Activated naive CD4-positive, alpha-beta T cell treated with anti-CD3 and anti-CD28 coated beads for 36 hours (primary cell): ENCODE measurements at regions of chr14 and their contacts with region 1.

Region 1: DNA sequence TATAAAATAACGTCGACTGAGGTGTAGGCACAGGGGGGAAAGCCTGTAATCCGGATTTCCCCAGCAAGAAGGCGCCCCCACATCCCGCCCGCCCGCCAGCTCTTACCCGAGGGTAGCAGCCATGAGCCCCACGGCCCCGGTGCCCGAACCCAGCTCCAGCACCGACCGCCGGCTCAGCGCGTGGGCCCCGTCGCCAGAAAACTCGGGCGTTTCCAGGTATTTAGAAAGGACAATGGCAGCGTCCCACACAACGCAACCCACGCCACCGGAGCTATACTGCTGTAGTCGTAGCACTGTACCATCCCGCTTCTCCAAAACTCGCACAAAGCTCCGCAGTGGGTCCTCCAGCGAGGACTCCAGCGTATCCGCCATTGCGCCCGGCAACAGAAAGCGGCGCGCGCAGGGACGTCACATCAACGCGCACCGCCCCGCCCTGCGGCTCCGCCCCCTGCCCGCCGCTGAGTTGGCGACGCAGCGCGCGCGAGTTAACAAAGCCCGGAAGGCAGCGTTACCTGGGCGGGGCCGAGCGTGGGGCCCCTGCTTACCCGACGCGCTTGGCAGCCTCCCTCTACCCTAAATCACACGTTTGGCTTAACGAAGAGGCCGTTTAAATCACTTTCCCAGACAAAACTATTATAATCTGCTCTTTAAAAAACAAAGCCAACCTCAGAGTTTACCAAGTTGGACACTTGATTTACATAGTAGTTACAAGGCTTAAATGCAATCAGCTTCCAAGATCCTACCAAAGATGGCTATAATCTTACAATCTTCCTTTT is at the start of gene VCPKMT:
- DNase-seq: peak; percentile 96
- H3K4me3 Mint-ChIP-seq: peak within 1 kb of the TSS; percentile 98
- H3K27ac Mint-ChIP-seq: peak within 1 kb of the TSS; percentile 94
- H3K4me1 Mint-ChIP-seq: peaks cover 32% of the 10 kb centered on the region
- H3K27me3 Mint-ChIP-seq: no peaks in the 10 kb centered on the region
- total RNA-seq, gene VCPKMT: 9.6 to 10.5 TPM

Region 2: GRCh38 chr14:49585803-49586672 is 530.3 kb before region 1 on chr14 and contains the start of gene RPS29:
- CTCF ChIA-PET with region 1: no interaction called
- intact Hi-C with region 1: loop called (anchors 5 kb)
- DNase-seq: peak; percentile 99
- H3K4me3 Mint-ChIP-seq: peak within 1 kb of the TSS; percentile 87
- H3K27ac Mint-ChIP-seq: peak within 1 kb of the TSS; percentile 98
- H3K4me1 Mint-ChIP-seq: peaks cover 40% of the 10 kb centered on the region
- H3K27me3 Mint-ChIP-seq: peaks cover 3% of the 10 kb centered on the region
- total RNA-seq, gene RPS29: 1,858 to 2,382 TPM

Region 3: GRCh38 chr14:49692811-49693734 is 423.3 kb before region 1 on chr14 and contains the start of gene KLHDC1:
- CTCF ChIA-PET with region 1: no interaction called
- intact Hi-C with region 1: loop called (anchors 1 kb)
- DNase-seq: peak; percentile 84
- H3K4me3 Mint-ChIP-seq: peak within 1 kb of the TSS; percentile 81
- H3K27ac Mint-ChIP-seq: peak within 1 kb of the TSS; percentile 62
- H3K4me1 Mint-ChIP-seq: peaks cover 34% of the 10 kb centered on the region
- H3K27me3 Mint-ChIP-seq: no peaks in the 10 kb centered on the region
- total RNA-seq, gene KLHDC1: 0.57 to 0.79 TPM

Region 4: DNA sequence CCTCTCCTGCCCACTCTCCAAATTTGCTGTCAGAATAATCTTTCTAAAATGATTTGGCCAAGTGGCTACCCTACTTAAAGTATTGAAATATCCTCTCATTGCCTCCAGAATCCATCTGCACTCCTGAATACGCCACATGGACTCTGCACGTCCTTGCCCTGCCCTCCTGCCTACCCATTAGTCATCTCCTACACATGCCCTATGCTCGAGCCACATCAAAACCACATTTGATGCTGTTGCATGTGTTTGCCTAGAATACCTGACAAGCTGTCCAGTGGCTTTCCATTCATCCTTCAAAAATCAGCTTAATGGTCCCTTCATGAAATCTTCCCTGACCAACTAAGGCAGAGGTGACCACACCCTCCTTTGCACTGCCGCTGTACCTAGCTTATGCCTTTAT is 17.0 kb before region 1 on chr14:
- CTCF ChIA-PET with region 1: interaction called, 11 read pairs
- intact Hi-C with region 1: no loop called
- DNase-seq: no peak
- H3K4me3 Mint-ChIP-seq: no peak overlapping the region
- H3K27ac Mint-ChIP-seq: no peak overlapping the region
- H3K4me1 Mint-ChIP-seq: peaks cover 57% of the 10 kb centered on the region
- H3K27me3 Mint-ChIP-seq: no peaks in the 10 kb centered on the region

Region 5: GRCh38 chr14:50260511-50260910 is 144.1 kb after region 1 on chr14:
- CTCF ChIA-PET with region 1: interaction called, 4 read pairs
- intact Hi-C with region 1: loop called (anchors 1 kb)
- DNase-seq: peak; percentile 43
- H3K4me3 Mint-ChIP-seq: no peak overlapping the region
- H3K27ac Mint-ChIP-seq: no peak overlapping the region
- H3K4me1 Mint-ChIP-seq: no peaks in the 10 kb centered on the region
- H3K27me3 Mint-ChIP-seq: no peaks in the 10 kb centered on the region

Region 6: DNA sequence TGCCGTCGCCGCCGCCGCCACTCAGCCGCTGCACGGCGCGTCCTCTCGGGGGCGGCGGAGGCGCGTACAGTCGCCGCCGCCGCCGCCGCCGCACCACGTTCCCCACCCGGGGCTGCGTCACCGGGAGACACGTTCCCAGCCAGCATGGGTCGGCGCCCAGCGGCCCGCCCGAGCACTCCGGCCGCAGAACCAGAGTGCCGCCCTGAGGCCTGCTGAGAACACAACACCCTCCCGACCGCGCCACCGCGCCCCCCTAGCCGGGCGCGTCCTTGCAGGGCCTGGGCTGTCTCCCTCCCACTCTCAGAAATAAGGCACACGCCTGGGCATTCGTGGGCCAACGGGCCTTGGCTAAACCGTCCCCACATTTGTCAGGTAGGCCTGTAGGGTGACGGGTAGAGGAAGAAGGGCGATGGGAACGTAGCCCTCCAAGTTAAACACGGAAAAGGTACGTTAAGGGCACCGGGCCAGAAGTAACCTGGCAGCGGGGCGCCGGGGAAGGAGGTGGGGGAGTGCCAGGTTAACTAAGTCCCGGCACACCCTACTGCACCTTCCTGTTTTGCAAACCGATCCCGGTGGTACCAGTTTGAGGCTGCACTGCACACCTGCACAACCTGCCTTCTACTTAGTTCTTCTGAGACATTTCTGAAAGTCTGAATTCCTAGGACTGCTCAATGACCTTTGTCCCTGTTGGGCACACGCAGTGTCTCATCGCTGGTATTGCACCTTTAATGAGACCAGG is 416.3 kb after region 1 on chr14 and contains the start of gene MAP4K5:
- CTCF ChIA-PET with region 1: no interaction called
- intact Hi-C with region 1: loop called (anchors 1 kb)
- DNase-seq: peak; percentile 89
- H3K4me3 Mint-ChIP-seq: peak within 1 kb of the TSS; percentile 85
- H3K27ac Mint-ChIP-seq: peak within 1 kb of the TSS; percentile 72
- H3K4me1 Mint-ChIP-seq: peaks cover 45% of the 10 kb centered on the region
- H3K27me3 Mint-ChIP-seq: no peaks in the 10 kb centered on the region
- total RNA-seq, gene MAP4K5: 10.2 to 11.2 TPM